ENCODE measurements at regions of chr5 and their contacts with region 1.

Region 1: GRCh38 chr5:54421976-54422375 is 33.5 kb upstream of the HSPB3 start:
- DNase-seq: no peak

Region 2: DNA sequence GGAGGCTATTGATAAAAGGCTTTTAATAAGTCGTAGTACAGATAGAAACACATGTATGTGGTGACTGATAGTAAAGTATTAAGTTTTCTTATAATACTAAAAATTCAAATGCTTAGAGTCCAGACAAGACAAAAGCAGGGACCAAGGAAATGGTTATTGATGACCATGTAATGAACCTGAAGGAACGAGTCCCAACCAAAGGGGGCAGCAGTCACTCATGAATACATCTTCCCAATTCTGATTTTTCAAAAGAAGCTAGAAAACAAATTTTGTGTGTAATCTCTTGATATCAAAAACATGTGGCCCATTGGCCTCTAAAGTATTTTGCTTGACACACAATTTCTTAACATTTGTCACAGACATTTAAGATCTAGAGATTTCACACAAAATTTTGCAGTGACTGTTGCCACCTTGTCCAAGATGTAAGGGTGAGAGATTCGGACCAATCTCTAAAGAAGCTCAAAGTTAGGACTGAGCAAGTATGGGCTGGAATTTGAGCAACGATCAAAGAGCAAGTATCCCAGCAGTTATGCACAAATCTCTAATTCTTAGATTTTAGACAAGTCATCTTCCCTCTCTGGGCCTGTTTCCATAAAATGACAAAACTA is 178.4 kb before region 1 on chr5:
- intact Hi-C with region 1: loop called (anchors 10 kb)
- DNase-seq: no peak